Left lung (tissue), 14 donors: ENCODE measurements at regions of chr4 and their contacts with region 1.

Region 1: GRCh38 chr4:142202404-142203332 is 566.3 kb downstream of the IL15 start:
- DNase-seq: no peak
- ATAC-seq: no peak
- H3K4me3 ChIP-seq: no peak overlapping the region
- H3K27ac ChIP-seq: no peak overlapping the region
- H3K4me1 ChIP-seq: no peaks in the 10 kb centered on the region
- H3K27me3 ChIP-seq: no peaks in the 10 kb centered on the region
- CTCF ChIP-seq: no peak

Region 2: DNA sequence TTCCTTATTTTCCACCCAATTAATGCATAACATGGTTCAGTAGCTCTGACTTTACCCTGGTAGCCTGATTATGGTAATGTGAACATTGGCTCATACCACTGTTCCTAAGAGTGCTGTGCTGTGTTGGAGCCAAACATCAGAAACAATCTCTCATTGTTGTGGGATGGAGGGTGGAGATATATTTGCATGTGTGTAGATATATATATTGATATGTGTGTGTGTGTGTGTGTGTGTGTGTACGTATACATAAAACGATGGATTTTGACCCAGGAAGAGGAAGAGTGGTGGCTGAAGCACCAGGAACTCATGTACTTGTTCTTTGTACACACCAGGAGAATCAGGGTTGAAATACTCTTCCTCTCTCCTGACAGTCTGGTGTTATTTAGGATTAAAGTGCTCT is 318.6 kb before region 1 on chr4:
- intact Hi-C with region 1: no loop called
- DNase-seq: no peak
- ATAC-seq: no peak
- H3K4me3 ChIP-seq: no peak overlapping the region
- H3K27ac ChIP-seq: no peak overlapping the region
- H3K4me1 ChIP-seq: no peaks in the 10 kb centered on the region
- H3K27me3 ChIP-seq: no peaks in the 10 kb centered on the region
- CTCF ChIP-seq: no peak

Region 3: DNA sequence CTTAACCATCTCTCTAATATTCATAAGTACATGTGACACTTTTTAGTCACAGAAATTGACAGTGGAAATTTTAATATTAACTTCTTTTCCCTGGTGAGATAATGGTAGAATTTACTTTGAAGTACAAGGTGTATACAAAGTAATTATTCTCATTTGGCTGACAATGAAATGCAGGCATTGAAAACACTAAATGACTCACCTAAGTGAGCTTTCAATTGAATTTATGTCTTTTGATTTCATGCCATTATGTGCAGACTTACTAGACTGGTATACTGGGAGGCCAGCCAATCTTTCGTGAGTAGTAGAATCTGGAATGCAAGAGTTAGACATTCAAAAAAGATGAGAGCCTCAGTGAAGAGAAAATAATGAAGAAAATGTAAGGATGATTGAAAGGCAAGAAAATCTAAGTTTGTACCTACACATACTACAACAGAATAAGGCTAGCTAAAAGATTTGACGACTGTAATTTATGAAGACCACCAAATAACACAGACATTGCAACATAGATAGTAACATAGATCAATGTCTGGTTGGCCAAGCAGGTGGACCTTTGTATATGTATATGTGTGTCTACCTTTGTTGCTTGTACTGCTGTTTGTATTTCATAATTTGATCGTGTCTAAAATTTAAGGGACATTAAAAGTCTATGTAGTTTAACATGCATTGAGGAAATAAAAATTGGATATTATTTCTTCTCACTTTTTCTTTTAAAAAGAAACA is 106.6 kb before region 1 on chr4:
- intact Hi-C with region 1: no loop called
- DNase-seq: no peak
- ATAC-seq: peak; percentile 49
- H3K4me3 ChIP-seq: no peak overlapping the region
- H3K27ac ChIP-seq: no peak overlapping the region
- H3K4me1 ChIP-seq: no peaks in the 10 kb centered on the region
- H3K27me3 ChIP-seq: no peaks in the 10 kb centered on the region
- CTCF ChIP-seq: no peak

Region 4: DNA sequence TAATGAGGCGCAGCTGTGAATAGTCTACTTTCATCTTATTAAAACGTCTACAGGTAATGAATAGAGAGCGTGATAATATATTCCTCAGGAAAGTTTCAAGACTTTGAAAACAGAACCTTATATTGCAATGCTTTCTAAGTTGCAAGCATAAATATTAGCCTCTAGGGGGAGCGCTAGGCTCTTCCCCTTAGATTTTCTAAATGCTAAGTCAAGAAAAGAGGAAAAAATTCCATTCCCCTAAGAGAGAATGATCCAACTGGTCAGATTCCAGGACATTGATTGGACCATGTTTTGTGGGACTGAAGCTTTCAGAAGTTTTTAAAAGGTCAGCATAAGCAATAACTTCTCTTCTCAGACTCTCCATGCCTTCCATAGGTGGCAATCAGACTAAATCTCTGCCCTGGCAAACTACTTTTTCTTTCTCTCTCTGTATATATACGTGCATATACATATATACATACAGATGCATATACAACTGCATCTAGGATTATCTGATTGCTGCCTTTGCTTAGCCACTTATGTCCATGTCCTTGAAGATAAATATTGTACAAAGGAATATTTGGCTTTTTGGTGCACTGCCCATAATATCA is 150.6 kb after region 1 on chr4:
- intact Hi-C with region 1: no loop called
- DNase-seq: peak in 2 of 4 donors; percentile 56 to 73
- ATAC-seq: peak; percentile 85
- H3K4me3 ChIP-seq: no peak overlapping the region
- H3K27ac ChIP-seq: no peak overlapping the region
- H3K4me1 ChIP-seq: peaks cover 0 to 10% of the 10 kb centered on the region in 2 donors
- H3K27me3 ChIP-seq: no peaks in the 10 kb centered on the region
- CTCF ChIP-seq: peak; percentile 77 to 90

Region 5: GRCh38 chr4:142427456-142427855 is 224.8 kb after region 1 on chr4:
- intact Hi-C with region 1: loop called in 1 of 2 experiments (anchors 10 kb)
- DNase-seq: no peak
- ATAC-seq: no peak
- H3K4me3 ChIP-seq: no peak overlapping the region
- H3K27ac ChIP-seq: no peak overlapping the region
- H3K4me1 ChIP-seq: no peaks in the 10 kb centered on the region
- H3K27me3 ChIP-seq: no peaks in the 10 kb centered on the region
- CTCF ChIP-seq: no peak